Aorta (tissue), 5 donors: ENCODE measurements at regions of chr1 and their contacts with region 1.

Region 1: GRCh38 chr1:109341944-109342930 is 35.4 kb upstream of the MYBPHL start:
- DNase-seq: no peak
- ATAC-seq: no peak
- H3K4me3 ChIP-seq: no peak overlapping the region
- H3K27ac ChIP-seq: peak overlapping the region in 1 of 2 donors; percentile 57
- H3K4me1 ChIP-seq: no peaks in the 10 kb centered on the region
- H3K27me3 ChIP-seq: no peaks in the 10 kb centered on the region

Region 2: DNA sequence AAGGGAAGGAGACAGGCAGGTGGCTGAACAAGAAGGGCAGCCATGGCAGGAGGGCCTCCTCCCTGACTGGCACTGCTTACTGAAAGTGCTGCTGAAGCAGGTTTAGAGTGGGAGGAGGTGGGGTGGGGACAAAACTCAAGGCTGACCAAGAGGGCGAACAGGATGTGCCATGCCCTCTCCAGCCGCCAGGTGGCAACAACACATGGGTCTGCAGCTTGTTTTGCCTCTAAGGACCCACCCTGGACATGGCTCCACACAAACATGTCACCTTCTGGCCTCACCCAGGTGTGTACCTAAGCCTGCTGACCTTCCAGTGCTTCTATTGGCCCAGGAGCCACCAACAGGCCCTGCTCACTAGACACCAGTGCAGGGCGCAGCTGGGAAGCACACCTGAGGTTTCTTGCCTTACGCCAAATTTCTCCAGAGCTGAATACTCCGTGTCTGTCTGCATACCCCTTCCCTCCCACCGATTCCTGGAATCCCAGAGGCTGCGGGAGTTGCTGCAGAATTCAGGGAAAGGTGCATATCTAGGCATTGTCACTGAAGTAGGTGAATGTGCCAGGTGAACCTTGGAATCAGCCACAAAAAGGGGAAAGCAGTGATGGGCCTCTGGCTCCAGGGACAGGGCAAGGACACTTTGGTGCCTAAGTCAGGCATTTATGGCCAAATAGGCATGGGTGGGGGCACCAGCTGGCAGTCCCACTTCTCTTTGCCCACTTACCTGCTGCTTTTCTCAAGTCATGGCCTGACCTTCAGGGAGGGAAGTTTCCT is 64.6 kb before region 1 on chr1:
- intact Hi-C with region 1: loop called (anchors 5 to 10 kb)
- DNase-seq: peak; percentile 84 to 94
- ATAC-seq: peak; percentile 81
- H3K4me3 ChIP-seq: no peak overlapping the region
- H3K27ac ChIP-seq: no peak overlapping the region
- H3K4me1 ChIP-seq: no peaks in the 10 kb centered on the region
- H3K27me3 ChIP-seq: no peaks in the 10 kb centered on the region